Pancreas (tissue), 10 donors: ENCODE measurements at regions of chr5 and their contacts with region 1.

Region 1: GRCh38 chr5:141149812-141150211 is at the start of gene PCDHB6:
- DNase-seq: no peak
- ATAC-seq: peak in 1 of 4 donors; percentile 37
- H3K4me3 ChIP-seq: peak within 1 kb of the TSS in 1 of 4 donors; percentile 11
- H3K27ac ChIP-seq: no peak within 1 kb of the TSS
- H3K4me1 ChIP-seq: no peaks in the 10 kb centered on the region
- H3K27me3 ChIP-seq: no peaks in the 10 kb centered on the region
- CTCF ChIP-seq: no peak
- total RNA-seq, gene PCDHB6: 0.31 to 0.55 (median 0.45) TPM

Region 2: GRCh38 chr5:141199359-141200235 is 49.8 kb after region 1 on chr5 and contains the start of gene PCDHB11:
- intact Hi-C with region 1: no loop called
- DNase-seq: peak in 2 of 6 donors; percentile 23 to 30
- ATAC-seq: peak; percentile 76 to 98 (median 84)
- H3K4me3 ChIP-seq: peak within 1 kb of the TSS in 2 of 4 donors; percentile 25 to 38
- H3K27ac ChIP-seq: peak within 1 kb of the TSS in 1 of 4 donors; percentile 41
- H3K4me1 ChIP-seq: no peaks in the 10 kb centered on the region
- H3K27me3 ChIP-seq: peaks cover 0 to 8% (median 3%) of the 10 kb centered on the region in 4 donors
- CTCF ChIP-seq: peak in 2 of 4 donors; percentile 10 to 26
- total RNA-seq, gene PCDHB11: 2.1 to 9.0 (median 4.9) TPM

Region 3: DNA sequence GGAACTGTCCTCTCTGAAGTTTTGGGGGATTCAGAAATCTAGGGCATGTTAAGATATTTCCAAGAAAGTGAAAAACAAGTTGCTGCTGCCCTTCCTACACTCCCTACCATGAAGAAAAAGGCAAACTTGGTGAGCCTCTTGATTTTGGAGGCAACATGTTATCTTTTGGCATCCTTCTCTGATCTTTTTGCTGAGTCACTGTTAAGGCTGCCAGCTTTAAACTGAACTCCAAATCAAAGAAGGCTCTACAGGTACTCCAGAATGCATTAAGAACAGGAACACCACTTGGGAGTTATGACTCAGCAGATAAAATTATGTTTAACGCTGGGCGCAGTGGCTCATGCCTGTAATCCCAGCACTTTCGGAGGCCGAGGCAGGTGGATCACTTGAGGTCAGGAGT is 119.4 kb after region 1 on chr5:
- intact Hi-C with region 1: no loop called
- DNase-seq: no peak
- ATAC-seq: no peak
- H3K4me3 ChIP-seq: no peak overlapping the region
- H3K27ac ChIP-seq: no peak overlapping the region
- H3K4me1 ChIP-seq: no peaks in the 10 kb centered on the region
- H3K27me3 ChIP-seq: no peaks in the 10 kb centered on the region
- CTCF ChIP-seq: no peak

Region 4: DNA sequence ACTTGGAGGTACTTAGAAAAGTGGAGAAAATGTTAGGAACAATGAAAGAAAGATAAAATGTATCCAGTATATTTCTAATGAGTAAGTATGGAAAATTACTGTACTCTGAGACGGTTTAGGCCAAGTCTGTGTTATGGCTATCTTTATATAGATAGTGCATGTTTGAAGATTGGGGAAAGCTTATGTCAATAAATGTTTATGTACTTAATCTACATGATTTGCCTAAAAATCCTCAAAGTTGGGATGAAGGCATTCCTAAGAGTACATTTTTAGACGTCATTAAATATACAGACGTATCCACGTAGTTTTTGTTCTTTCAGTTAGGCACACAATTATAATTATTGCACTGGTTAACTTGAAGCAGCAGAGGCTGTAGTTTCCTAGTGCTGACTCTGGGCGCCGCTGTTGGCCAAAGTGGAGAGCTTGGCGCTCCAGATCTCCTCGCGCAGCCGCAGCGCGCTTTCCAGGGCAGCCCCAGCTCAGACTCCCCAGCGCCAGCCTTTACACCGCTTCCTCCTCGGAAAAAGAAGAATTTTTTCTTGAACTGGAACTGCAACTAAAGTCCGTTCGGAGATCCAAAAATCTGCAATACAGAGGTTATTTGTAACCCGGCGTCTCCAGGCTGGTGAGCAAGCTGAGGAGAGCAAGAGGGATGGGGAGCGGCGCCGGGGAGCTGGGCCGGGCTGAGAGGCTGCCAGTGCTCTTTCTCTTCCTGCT is 237.6 kb after region 1 on chr5 and contains the start of gene PCDHGB4:
- intact Hi-C with region 1: loop called in 1 of 3 experiments (anchors 10 kb)
- DNase-seq: no peak
- ATAC-seq: peak; percentile 60 to 94 (median 82)
- H3K4me3 ChIP-seq: peak within 1 kb of the TSS in 1 of 4 donors; percentile 7
- H3K27ac ChIP-seq: no peak within 1 kb of the TSS
- H3K4me1 ChIP-seq: no peaks in the 10 kb centered on the region
- H3K27me3 ChIP-seq: no peaks in the 10 kb centered on the region
- CTCF ChIP-seq: no peak
- total RNA-seq, gene PCDHGB4: 1.5 to 3.1 (median 1.9) TPM